Naive thymus-derived CD4-positive, alpha-beta T cell (primary cell): ENCODE measurements at regions of chr3 and their contacts with region 1.

Region 1: DNA sequence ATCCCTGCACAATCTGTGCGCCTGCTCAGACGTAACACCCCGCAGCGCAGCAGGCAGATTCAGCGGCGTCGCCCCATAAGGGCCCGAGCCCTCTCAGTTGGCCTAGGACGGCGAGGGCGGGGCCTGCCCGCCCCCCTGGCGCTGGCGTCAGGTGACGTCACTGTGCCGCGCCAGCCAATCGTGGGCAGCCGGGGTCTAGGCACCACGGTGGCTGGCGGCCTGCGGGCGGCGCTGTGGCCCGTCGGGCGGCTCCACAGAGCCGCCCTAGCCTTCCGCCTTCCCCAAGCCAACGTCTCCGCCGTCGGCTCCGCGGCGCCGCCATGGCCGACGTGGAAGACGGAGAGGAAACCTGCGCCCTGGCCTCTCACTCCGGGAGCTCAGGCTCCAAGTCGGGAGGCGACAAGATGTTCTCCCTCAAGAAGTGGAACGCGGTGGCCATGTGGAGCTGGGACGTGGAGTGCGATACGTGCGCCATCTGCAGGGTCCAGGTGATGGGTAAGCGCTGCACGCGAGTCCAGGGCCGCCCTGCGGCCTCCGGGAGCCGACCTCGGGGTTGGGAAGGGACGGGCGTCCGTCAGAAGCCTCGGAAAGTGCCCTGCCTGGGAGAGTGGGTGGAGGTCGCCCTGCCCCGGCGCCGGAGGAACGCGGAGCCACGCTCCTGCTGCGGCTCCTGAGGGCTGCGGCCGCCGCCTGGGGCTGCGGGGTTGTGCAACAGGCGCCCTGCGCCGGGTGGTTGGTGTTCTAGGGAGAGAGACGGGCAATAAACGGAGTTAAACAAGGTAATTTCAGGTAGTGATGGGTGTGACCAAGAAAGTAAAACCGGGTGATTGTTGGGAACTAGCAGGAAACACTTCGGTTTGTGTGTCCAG is at the start of gene RNF7:
- DNase-seq: peak; percentile 95 to 98 (median 98)
- ATAC-seq: peak; percentile 96
- H3K4me3 ChIP-seq: peak within 1 kb of the TSS; percentile 94
- H3K4me3 Mint-ChIP-seq: peak within 1 kb of the TSS; percentile 92 to 100 (median 98)
- H3K27ac ChIP-seq: peak within 1 kb of the TSS; percentile 95
- H3K27ac Mint-ChIP-seq: peak within 1 kb of the TSS; percentile 92 to 99 (median 98)
- H3K4me1 ChIP-seq: peaks cover 20 to 25% of the 10 kb centered on the region in 2 donors
- H3K4me1 Mint-ChIP-seq: peaks cover 21 to 47% (median 44%) of the 10 kb centered on the region in 7 donors
- H3K27me3 ChIP-seq: no peaks in the 10 kb centered on the region
- H3K27me3 Mint-ChIP-seq: peaks cover 0 to 5% (median 0%) of the 10 kb centered on the region in 5 donors
- total RNA-seq, gene RNF7: 45.6 to 63.2 (median 57.3) TPM

Region 2: DNA sequence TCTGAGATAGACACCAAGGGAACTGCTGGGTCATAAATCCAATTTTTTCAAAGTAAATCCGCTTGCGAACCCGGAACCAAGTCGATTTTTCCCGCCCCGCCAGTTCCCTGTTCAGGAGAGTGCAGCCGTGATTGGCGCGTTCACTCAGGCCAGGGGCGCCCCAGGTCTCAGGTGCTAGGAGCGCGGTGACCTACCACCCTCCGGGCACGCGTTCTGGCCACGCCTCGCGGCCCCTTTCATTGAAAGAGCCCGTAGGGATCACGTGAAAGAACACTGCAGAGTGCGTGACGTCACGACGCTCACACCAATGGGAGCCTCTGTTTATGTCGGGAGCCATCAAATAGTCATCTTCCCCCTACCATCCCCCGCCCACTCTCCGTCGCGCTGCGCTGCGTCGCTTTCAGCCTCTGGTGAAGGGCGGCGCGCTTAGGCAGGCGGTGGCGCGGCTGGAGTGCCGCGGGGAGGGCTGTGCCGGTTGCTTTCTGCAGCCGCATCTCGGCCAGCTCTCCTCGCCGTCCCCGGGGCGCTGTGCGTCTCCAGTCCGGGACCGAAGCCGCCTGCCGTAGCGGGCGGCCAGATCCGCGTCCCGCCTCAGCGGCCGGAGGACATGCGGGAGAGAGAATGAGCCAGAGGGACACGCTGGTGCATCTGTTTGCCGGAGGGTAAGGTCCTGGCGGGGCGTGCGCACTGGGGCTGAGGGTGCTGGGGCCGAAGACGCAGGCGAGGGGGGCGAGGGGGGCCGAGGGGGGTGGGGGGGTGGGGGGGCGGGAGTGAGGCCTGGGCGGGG is 796.6 kb before region 1 on chr3 and contains the start of gene SLC25A36:
- CTCF ChIA-PET with region 1: no interaction called
- POLR2A ChIA-PET with region 1: no interaction called
- intact Hi-C with region 1: loop called (anchors 2 to 5 kb)
- DNase-seq: peak; percentile 83 to 96 (median 94)
- ATAC-seq: peak; percentile 99
- H3K4me3 ChIP-seq: peak within 1 kb of the TSS; percentile 69
- H3K4me3 Mint-ChIP-seq: peak within 1 kb of the TSS; percentile 90 to 100 (median 96)
- H3K27ac ChIP-seq: peak within 1 kb of the TSS; percentile 89
- H3K27ac Mint-ChIP-seq: peak within 1 kb of the TSS; percentile 94 to 100 (median 99)
- H3K4me1 ChIP-seq: peaks cover 9 to 14% of the 10 kb centered on the region in 2 donors
- H3K4me1 Mint-ChIP-seq: peaks cover 31 to 52% (median 47%) of the 10 kb centered on the region in 7 donors
- H3K27me3 ChIP-seq: no peaks in the 10 kb centered on the region
- H3K27me3 Mint-ChIP-seq: peaks cover 0 to 30% (median 0%) of the 10 kb centered on the region in 5 donors
- total RNA-seq, gene SLC25A36: 43.4 to 121 (median 66.9) TPM

Region 3: DNA sequence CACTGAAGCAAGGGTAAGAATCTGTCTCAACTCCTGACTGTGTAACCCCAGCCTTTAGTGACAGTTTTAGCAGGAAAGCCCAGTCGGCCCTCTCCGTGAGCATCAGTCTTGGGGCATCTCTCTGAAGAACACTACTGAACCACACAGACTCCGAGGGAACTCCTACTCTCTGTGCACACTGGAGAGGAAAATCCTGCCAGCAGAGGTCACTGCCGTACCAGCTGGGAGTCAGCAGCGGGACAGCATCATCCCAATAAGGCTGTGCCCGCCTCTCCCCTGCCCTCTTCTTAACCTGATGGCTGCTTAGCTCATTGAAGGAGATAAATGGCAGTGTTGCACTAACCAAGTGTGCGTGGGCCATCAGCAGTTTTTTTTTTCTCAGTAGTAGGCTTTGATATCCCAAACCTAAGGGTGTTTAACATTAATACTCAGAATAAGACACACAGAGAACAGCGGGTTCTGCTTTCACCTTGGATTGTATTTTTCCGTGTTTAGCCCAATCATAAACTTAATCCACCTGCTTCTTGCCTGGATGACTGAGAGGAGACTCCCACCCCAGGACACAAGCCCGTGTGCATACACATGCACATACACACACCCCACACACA is 278.1 kb before region 1 on chr3:
- CTCF ChIA-PET with region 1: interaction called, 5 read pairs
- POLR2A ChIA-PET with region 1: no interaction called
- intact Hi-C with region 1: loop called (anchors 1 to 2 kb)
- DNase-seq: peak; percentile 72 to 88 (median 82)
- ATAC-seq: peak; percentile 100
- H3K4me3 ChIP-seq: no peak overlapping the region
- H3K4me3 Mint-ChIP-seq: no peak overlapping the region
- H3K27ac ChIP-seq: no peak overlapping the region
- H3K27ac Mint-ChIP-seq: peak overlapping the region in 1 of 9 donors; percentile 43
- H3K4me1 ChIP-seq: no peaks in the 10 kb centered on the region
- H3K4me1 Mint-ChIP-seq: peaks cover 0 to 20% (median 5%) of the 10 kb centered on the region in 7 donors
- H3K27me3 ChIP-seq: no peaks in the 10 kb centered on the region
- H3K27me3 Mint-ChIP-seq: peaks cover 0 to 2% (median 0%) of the 10 kb centered on the region in 5 donors

Region 4: GRCh38 chr3:141796081-141796888 is 58.0 kb after region 1 on chr3:
- CTCF ChIA-PET with region 1: interaction called, 6 read pairs
- POLR2A ChIA-PET with region 1: interaction called, 32 read pairs
- intact Hi-C with region 1: loop called (anchors 1 kb)
- DNase-seq: peak; percentile 14 to 78 (median 61)
- ATAC-seq: peak; percentile 82
- H3K4me3 ChIP-seq: peak overlapping the region; percentile 68
- H3K4me3 Mint-ChIP-seq: peak overlapping the region; percentile 86 to 97 (median 90)
- H3K27ac ChIP-seq: peak overlapping the region; percentile 79
- H3K27ac Mint-ChIP-seq: peak overlapping the region; percentile 92 to 99 (median 97)
- H3K4me1 ChIP-seq: peaks cover 48 to 56% of the 10 kb centered on the region in 2 donors
- H3K4me1 Mint-ChIP-seq: peaks cover 45 to 71% (median 60%) of the 10 kb centered on the region in 7 donors
- H3K27me3 ChIP-seq: no peaks in the 10 kb centered on the region
- H3K27me3 Mint-ChIP-seq: peaks cover 0 to 2% (median 0%) of the 10 kb centered on the region in 5 donors

Region 5: GRCh38 chr3:141998669-141999290 is 260.5 kb after region 1 on chr3:
- CTCF ChIA-PET with region 1: no interaction called
- POLR2A ChIA-PET with region 1: no interaction called
- intact Hi-C with region 1: loop called (anchors 1 to 5 kb)
- DNase-seq: peak in 3 of 9 donors; percentile 2 to 19 (median 10)
- ATAC-seq: no peak
- H3K4me3 ChIP-seq: no peak overlapping the region
- H3K4me3 Mint-ChIP-seq: no peak overlapping the region
- H3K27ac ChIP-seq: no peak overlapping the region
- H3K27ac Mint-ChIP-seq: no peak overlapping the region
- H3K4me1 ChIP-seq: no peaks in the 10 kb centered on the region
- H3K4me1 Mint-ChIP-seq: peaks cover 0 to 2% (median 0%) of the 10 kb centered on the region in 7 donors
- H3K27me3 ChIP-seq: no peaks in the 10 kb centered on the region
- H3K27me3 Mint-ChIP-seq: no peaks in the 10 kb centered on the region

Region 6: GRCh38 chr3:142279965-142280590 is 541.8 kb after region 1 on chr3:
- CTCF ChIA-PET with region 1: no interaction called
- POLR2A ChIA-PET with region 1: no interaction called
- intact Hi-C with region 1: loop called (anchors 1 to 2 kb)
- DNase-seq: peak in 8 of 9 donors; percentile 18 to 64 (median 44)
- ATAC-seq: peak; percentile 71
- H3K4me3 ChIP-seq: no peak overlapping the region
- H3K4me3 Mint-ChIP-seq: no peak overlapping the region
- H3K27ac ChIP-seq: no peak overlapping the region
- H3K27ac Mint-ChIP-seq: no peak overlapping the region
- H3K4me1 ChIP-seq: peaks cover 0 to 8% of the 10 kb centered on the region in 2 donors
- H3K4me1 Mint-ChIP-seq: peaks cover 0 to 23% (median 0%) of the 10 kb centered on the region in 7 donors
- H3K27me3 ChIP-seq: no peaks in the 10 kb centered on the region
- H3K27me3 Mint-ChIP-seq: no peaks in the 10 kb centered on the region

Region 7: DNA sequence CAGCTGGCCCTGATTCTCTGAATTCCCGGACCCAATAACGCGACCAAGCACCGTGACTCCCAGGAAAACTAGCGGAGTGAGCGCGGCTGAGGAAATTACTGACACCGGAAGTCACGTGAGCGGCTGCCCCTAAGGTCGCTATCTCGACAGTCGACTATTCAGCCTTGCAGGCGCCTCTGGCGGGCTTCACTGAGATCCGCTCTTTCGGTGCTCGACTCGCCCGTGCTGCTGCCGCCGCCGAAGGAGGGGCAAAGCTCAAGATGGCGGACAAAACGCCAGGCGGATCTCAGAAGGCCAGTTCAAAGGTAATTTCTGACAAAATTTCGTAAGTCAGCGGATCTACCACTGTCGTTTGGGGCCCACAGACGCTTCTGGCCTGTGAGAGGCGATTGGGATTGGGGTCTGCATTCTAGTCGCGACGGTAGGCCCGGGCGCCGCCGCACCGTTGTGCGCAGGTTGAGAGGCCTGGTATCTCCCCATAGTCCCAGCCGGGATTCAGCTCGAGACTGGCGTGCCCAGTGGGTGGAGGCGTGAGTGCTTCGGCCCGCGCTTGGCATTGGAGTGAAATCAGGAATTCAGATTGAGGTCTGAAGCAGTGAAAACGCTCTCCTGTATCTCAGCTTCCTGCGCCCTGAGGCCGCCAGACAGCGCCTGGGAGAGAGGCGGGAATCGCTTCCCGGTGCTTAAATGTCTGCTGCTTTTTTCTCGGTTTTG is 1263.3 kb after region 1 on chr3 and contains the start of gene U2SURP:
- CTCF ChIA-PET with region 1: no interaction called
- POLR2A ChIA-PET with region 1: no interaction called
- intact Hi-C with region 1: loop called in 1 of 2 experiments (anchors 1 kb)
- DNase-seq: peak; percentile 77 to 95 (median 88)
- ATAC-seq: peak; percentile 99
- H3K4me3 ChIP-seq: peak within 1 kb of the TSS; percentile 96
- H3K4me3 Mint-ChIP-seq: peak within 1 kb of the TSS; percentile 91 to 100 (median 98)
- H3K27ac ChIP-seq: peak within 1 kb of the TSS; percentile 95
- H3K27ac Mint-ChIP-seq: peak within 1 kb of the TSS; percentile 96 to 100 (median 99)
- H3K4me1 ChIP-seq: peaks cover 13 to 20% of the 10 kb centered on the region in 2 donors
- H3K4me1 Mint-ChIP-seq: peaks cover 34 to 63% (median 53%) of the 10 kb centered on the region in 7 donors
- H3K27me3 ChIP-seq: no peaks in the 10 kb centered on the region
- H3K27me3 Mint-ChIP-seq: peaks cover 0 to 5% (median 2%) of the 10 kb centered on the region in 5 donors
- total RNA-seq, gene U2SURP: 132 to 172 (median 158) TPM